Motor neuron (in vitro differentiated cells): ENCODE measurements at regions of chr1 and their contacts with region 1.

Region 1: DNA sequence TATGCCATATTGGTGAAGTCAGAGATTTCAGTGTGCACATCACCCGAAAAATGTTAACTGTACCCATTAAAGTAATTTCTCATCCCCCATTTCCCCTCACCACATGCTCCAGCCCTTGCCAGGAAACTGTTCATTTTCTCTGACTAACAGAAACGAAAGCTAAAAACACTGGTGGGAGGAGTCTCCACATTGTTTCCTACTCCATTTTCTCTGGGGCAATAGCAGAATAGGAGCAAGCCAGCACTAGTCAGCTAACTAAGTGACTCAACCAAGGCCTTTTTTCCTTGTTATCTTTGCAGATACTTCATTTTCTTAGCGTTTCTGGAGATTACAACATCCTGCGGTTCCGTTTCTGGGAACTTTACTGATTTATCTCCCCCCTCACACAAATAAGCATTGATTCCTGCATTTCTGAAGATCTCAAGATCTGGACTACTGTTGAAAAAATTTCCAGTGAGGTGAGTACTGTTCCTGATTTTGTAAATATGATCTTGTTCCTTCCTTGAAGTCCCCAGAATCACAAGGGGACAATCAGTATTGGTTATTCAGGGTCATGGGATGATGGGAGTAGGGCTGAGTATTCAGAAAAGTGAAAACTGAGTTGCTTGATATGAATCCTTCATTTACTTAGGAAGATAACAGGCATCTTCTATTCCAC is at the start of gene IFI16:
- ATAC-seq: peak; percentile 71 to 91 (median 78)
- H3K4me3 ChIP-seq: peak within 1 kb of the TSS; percentile 9 to 35 (median 13)
- H3K27ac ChIP-seq: peak within 1 kb of the TSS; percentile 3 to 13
- H3K4me1 ChIP-seq: peaks cover 30 to 32% of the 10 kb centered on the region in 2 donors
- total RNA-seq, gene IFI16: 16.1 to 179 (median 40.5) TPM

Region 2: GRCh38 chr1:158163000-158163947 is 846.6 kb before region 1 on chr1:
- in situ Hi-C with region 1: no loop called
- ATAC-seq: no peak
- H3K4me3 ChIP-seq: no peak overlapping the region
- H3K27ac ChIP-seq: no peak overlapping the region
- H3K4me1 ChIP-seq: no peaks in the 10 kb centered on the region

Region 3: DNA sequence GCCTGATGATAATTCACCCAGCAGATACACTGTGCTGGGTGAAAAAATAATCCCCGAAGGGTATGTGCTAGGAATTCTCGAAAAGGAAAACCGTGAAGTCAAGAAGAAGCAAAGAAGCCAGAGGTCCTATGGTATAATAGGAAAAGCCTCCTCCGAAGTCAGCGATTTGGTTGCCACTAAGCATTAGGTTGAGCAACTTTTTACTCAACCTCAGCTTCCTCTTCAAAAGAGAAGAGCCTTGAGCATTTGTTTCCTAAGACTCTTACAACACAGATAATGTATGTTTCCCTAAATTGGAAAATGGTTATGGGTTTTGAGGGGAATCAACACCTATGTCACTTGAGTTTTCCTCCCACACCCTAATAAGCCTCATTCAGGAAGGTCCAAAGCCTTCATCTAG is 200.0 kb before region 1 on chr1:
- in situ Hi-C with region 1: no loop called
- ATAC-seq: no peak
- H3K4me3 ChIP-seq: no peak overlapping the region
- H3K27ac ChIP-seq: no peak overlapping the region
- H3K4me1 ChIP-seq: no peaks in the 10 kb centered on the region

Region 4: GRCh38 chr1:159071970-159072582 is 62.2 kb after region 1 on chr1:
- in situ Hi-C with region 1: loop called in 1 of 9 experiments (anchors 10 kb)
- ATAC-seq: peak; percentile 52 to 84 (median 69)
- H3K4me3 ChIP-seq: no peak overlapping the region
- H3K27ac ChIP-seq: no peak overlapping the region
- H3K4me1 ChIP-seq: no peaks in the 10 kb centered on the region

Region 5: GRCh38 chr1:159098596-159098995 is 88.8 kb after region 1 on chr1:
- in situ Hi-C with region 1: no loop called
- ATAC-seq: no peak
- H3K4me3 ChIP-seq: no peak overlapping the region
- H3K27ac ChIP-seq: no peak overlapping the region
- H3K4me1 ChIP-seq: no peaks in the 10 kb centered on the region